Lower lobe of right lung (tissue), 2 donors: ENCODE measurements at regions of chr17 and their contacts with region 1.

Region 1: GRCh38 chr17:29148790-29149430 is 31.3 kb downstream of the MYO18A start:
- DNase-seq: peak; percentile 96
- ATAC-seq: peak; percentile 95 to 98
- H3K4me3 ChIP-seq: peak overlapping the region; percentile 58
- H3K27ac ChIP-seq: peak overlapping the region; percentile 86
- H3K4me1 ChIP-seq: peaks cover 58% of the 10 kb centered on the region
- H3K27me3 ChIP-seq: no peaks in the 10 kb centered on the region
- CTCF ChIP-seq: peak; percentile 98

Region 2: DNA sequence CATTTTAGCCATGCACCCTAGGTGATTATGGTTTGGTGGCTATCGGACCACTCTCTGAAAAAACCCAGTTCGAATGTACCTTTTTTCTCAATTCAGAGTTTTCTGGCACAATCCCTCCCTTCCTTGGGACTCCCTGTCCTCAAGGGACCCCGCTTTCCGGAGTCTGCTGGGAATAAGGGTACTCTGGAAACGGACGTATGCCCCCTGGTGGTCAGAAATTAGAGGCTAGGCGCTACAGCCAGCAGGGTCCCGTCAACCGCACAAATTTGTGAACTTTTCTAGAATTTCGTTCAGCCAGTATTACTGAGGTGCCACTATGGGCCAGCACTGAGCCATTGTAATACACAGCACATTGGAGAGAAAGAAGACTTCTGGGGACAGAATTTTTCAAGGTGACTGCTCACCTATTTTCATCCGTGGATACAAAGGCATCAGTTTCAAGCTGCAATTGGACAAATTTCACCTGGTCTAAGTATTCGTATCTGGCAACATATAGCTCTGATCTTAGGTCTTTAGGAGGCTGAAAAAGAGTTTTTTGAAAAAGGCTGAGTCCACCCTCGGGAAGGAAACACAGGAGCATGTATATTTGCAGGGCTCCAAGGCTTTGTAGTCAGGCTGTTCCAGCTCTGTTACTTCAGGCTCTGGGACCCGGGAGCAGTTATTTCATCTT is 70.6 kb after region 1 on chr17:
- intact Hi-C with region 1: loop called (anchors 5 kb)
- DNase-seq: peak; percentile 72
- ATAC-seq: peak; percentile 90
- H3K4me3 ChIP-seq: no peak overlapping the region
- H3K27ac ChIP-seq: no peak overlapping the region
- H3K4me1 ChIP-seq: peaks cover 9% of the 10 kb centered on the region
- H3K27me3 ChIP-seq: no peaks in the 10 kb centered on the region
- CTCF ChIP-seq: peak; percentile 96

Region 3: GRCh38 chr17:29347831-29348629 is 199.1 kb after region 1 on chr17:
- intact Hi-C with region 1: no loop called
- DNase-seq: no peak
- ATAC-seq: no peak
- H3K4me3 ChIP-seq: no peak overlapping the region
- H3K27ac ChIP-seq: no peak overlapping the region
- H3K4me1 ChIP-seq: no peaks in the 10 kb centered on the region
- H3K27me3 ChIP-seq: no peaks in the 10 kb centered on the region
- CTCF ChIP-seq: no peak

Region 4: DNA sequence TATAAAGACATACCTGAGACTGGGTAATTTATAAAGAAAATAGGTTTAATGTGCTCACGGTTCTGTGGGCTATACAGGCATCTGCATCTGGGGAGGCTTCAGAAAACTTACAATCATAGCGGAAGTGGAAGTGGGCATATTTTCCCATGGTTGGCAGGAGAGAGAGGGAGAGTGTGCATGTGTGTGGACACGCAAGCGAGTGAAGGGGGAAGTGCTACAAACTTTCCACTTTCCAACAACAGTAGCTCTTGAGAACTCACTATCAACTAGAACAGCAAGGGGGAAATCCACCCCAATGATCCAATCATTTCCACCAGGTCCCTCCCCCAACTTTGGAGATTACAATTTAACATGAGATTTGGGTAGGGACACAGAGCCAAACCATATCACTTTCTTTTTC is 252.3 kb after region 1 on chr17:
- intact Hi-C with region 1: no loop called
- DNase-seq: no peak
- ATAC-seq: peak in 1 of 2 donors; percentile 56
- H3K4me3 ChIP-seq: no peak overlapping the region
- H3K27ac ChIP-seq: no peak overlapping the region
- H3K4me1 ChIP-seq: peaks cover 16% of the 10 kb centered on the region
- H3K27me3 ChIP-seq: no peaks in the 10 kb centered on the region
- CTCF ChIP-seq: no peak